Caco-2 (cell line): ENCODE measurements at regions of chr19 and their contacts with region 1.

Region 1: GRCh38 chr19:18675779-18676178 is 7.7 kb upstream of the CRTC1 start:
- DNase-seq: peak in 1 of 2 experiments; percentile 31
- H3K4me3 ChIP-seq: no peak overlapping the region
- H3K4me3 Mint-ChIP-seq: no peak overlapping the region
- H3K27ac Mint-ChIP-seq: no peak overlapping the region
- H3K4me1 ChIP-seq: peaks cover 6% of the 10 kb centered on the region; the same call in 1 of the 2 replicates
- H3K4me1 Mint-ChIP-seq: no peaks in the 10 kb centered on the region
- H3K27me3 ChIP-seq: no peaks in the 10 kb centered on the region
- H3K27me3 Mint-ChIP-seq: no peaks in the 10 kb centered on the region
- CTCF ChIP-seq: peak in 1 of 2 experiments; percentile 13

Region 2: DNA sequence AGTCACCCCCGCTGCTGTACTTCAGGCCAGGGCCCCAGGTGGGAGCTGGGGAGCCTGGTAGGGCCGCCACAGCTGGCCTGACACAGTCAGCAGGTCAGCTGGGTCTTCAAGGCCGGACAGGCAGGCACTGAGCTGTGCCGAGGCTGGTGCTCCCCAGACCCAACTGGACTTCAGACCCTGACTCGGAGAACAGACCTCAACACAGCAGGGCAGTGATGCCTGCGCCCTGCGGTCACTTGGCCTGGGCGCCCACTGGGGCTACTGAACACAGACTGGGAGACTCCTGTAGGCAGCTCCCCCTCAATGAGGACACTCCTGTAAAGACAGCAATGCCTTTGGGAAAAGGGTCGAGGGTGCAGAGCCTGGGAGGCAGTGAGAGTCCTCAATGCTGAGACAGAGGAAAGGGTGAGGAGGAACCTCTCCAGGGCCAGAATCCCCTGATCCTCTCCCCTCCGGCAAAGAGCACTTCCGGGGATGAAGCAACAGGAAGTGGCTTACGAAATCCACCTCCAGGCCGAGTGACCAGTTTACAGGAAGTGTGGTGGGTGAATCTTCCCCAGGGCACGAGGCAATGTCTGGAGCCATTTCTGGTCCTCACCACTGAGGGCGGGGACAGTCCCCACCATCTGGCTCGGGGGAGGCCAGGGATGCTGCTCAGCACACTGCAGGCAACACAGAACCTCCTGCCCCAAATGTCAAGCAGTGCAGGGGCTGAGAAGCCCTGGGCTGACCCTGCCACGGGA is 197.0 kb before region 1 on chr19:
- CTCF ChIA-PET with region 1: no interaction called
- POLR2A ChIA-PET with region 1: no interaction called
- intact Hi-C with region 1: loop called (anchors 10 kb)
- DNase-seq: peak in 1 of 2 experiments; percentile 37
- H3K4me3 ChIP-seq: no peak overlapping the region
- H3K4me3 Mint-ChIP-seq: no peak overlapping the region
- H3K27ac Mint-ChIP-seq: peak overlapping the region; percentile 74
- H3K4me1 ChIP-seq: no peaks in the 10 kb centered on the region
- H3K4me1 Mint-ChIP-seq: peaks cover 6% of the 10 kb centered on the region
- H3K27me3 ChIP-seq: no peaks in the 10 kb centered on the region
- H3K27me3 Mint-ChIP-seq: no peaks in the 10 kb centered on the region
- CTCF ChIP-seq: no peak

Region 3: GRCh38 chr19:18541992-18542935 is 133.5 kb before region 1 on chr19:
- CTCF ChIA-PET with region 1: no interaction called
- POLR2A ChIA-PET with region 1: no interaction called
- intact Hi-C with region 1: no loop called
- DNase-seq: no peak
- H3K4me3 ChIP-seq: peak overlapping the region; percentile 84
- H3K4me3 Mint-ChIP-seq: peak overlapping the region; percentile 82
- H3K27ac Mint-ChIP-seq: peak overlapping the region; percentile 63
- H3K4me1 ChIP-seq: peaks cover 11% of the 10 kb centered on the region
- H3K4me1 Mint-ChIP-seq: no peaks in the 10 kb centered on the region
- H3K27me3 ChIP-seq: no peaks in the 10 kb centered on the region
- H3K27me3 Mint-ChIP-seq: no peaks in the 10 kb centered on the region
- CTCF ChIP-seq: no peak